ENCODE measurements at regions of chr14 and their contacts with region 1.

Region 1: DNA sequence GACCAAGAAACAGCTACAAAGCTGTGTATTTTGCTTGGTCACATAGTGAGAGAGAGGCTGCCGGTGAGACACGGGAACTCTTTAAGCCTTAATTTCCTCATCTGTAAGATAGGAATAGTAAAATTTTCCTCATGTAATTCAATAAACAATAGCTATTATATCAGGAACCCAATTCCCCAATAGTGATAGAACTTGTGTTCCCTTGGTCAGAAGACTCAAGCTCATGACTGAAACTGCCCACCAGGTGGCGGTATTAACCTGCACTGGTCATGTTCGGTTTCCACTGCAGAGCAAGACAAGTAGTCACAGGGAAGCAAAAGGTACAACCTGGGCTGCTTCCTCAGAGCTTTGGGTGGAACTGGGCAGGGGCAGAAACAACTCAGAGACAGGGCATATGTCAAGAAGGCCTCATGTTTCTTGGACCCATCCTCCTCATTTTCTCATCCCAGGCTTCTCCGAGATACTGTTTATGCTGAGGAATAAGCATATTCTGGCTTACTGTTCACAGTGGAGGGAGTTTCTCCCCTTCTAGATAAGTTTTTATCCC is 4.2 kb upstream of the AJUBA start:
- DNase-seq: peak; percentile 81 to 96 (median 88)
- ATAC-seq: peak; percentile 67
- H3K4me3 ChIP-seq: no peak overlapping the region
- H3K4me3 Mint-ChIP-seq: peak overlapping the region; percentile 3
- H3K27ac ChIP-seq: no peak overlapping the region
- H3K27ac Mint-ChIP-seq: no peak overlapping the region
- H3K4me1 ChIP-seq: peaks cover 17% of the 10 kb centered on the region
- H3K4me1 Mint-ChIP-seq: peaks cover 3% of the 10 kb centered on the region
- H3K27me3 ChIP-seq: peaks cover 0 to 5% of the 10 kb centered on the region in 2 experiments
- H3K27me3 Mint-ChIP-seq: no peaks in the 10 kb centered on the region
- CTCF ChIP-seq: peak; percentile 95

Region 2: GRCh38 chr14:22614224-22614799 is 372.3 kb before region 1 on chr14:
- CTCF ChIA-PET with region 1: no interaction called
- POLR2A ChIA-PET with region 1: no interaction called
- intact Hi-C with region 1: no loop called
- DNase-seq: no peak
- ATAC-seq: no peak
- H3K4me3 ChIP-seq: no peak overlapping the region
- H3K4me3 Mint-ChIP-seq: no peak overlapping the region
- H3K27ac ChIP-seq: no peak overlapping the region
- H3K27ac Mint-ChIP-seq: no peak overlapping the region
- H3K4me1 ChIP-seq: no peaks in the 10 kb centered on the region
- H3K4me1 Mint-ChIP-seq: no peaks in the 10 kb centered on the region
- H3K27me3 ChIP-seq: no peaks in the 10 kb centered on the region
- H3K27me3 Mint-ChIP-seq: no peaks in the 10 kb centered on the region
- CTCF ChIP-seq: no peak

Region 3: DNA sequence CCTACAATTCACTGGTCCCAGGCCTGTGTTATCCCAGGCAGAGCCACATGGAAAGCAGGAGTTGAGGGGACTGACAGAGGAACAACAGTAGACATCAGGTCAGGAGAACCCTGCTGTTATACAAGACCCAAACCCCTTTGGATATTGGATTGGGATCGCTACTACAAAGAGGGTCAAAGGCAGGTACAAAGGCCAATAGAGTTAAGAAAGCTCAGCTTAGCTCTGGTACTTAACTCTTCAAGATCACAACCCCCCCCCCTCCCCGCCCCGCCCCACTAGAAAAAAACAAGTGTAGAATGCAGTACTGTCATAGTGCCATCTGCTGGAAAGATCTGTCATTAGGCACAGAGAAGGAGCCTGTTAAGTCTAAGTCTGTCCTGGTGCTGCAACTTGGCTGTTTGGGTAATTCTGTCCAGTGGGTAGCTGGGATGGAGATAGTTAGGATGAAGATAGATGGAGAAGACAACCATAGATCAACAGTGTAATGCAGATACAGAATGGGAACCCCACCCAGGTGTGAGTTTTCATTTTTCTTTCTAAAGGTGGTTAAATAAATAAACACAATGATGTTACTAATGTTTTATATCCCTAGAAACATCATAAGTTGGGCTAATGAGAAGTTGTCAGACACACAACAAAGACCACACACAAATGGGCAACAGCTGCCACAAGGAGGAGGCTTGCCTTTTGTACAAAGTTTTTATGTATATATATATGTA is 86.3 kb before region 1 on chr14:
- CTCF ChIA-PET with region 1: no interaction called
- POLR2A ChIA-PET with region 1: no interaction called
- intact Hi-C with region 1: no loop called
- DNase-seq: peak in 13 of 14 experiments; percentile 14 to 87 (median 36)
- ATAC-seq: peak; percentile 92
- H3K4me3 ChIP-seq: no peak overlapping the region
- H3K4me3 Mint-ChIP-seq: no peak overlapping the region
- H3K27ac ChIP-seq: no peak overlapping the region
- H3K27ac Mint-ChIP-seq: no peak overlapping the region
- H3K4me1 ChIP-seq: peaks cover 13% of the 10 kb centered on the region
- H3K4me1 Mint-ChIP-seq: peaks cover 15% of the 10 kb centered on the region
- H3K27me3 ChIP-seq: no peaks in the 10 kb centered on the region
- H3K27me3 Mint-ChIP-seq: no peaks in the 10 kb centered on the region
- CTCF ChIP-seq: peak; percentile 68

Region 4: GRCh38 chr14:22929104-22929847 is 57.3 kb before region 1 on chr14 and contains the start of gene PRMT5:
- CTCF ChIA-PET with region 1: interaction called, 17 read pairs
- POLR2A ChIA-PET with region 1: interaction called, 11 read pairs
- intact Hi-C with region 1: loop called (anchors 2 kb)
- DNase-seq: peak; percentile 93 to 100 (median 97)
- ATAC-seq: peak; percentile 96
- H3K4me3 ChIP-seq: peak within 1 kb of the TSS; percentile 91
- H3K4me3 Mint-ChIP-seq: no peak within 1 kb of the TSS
- H3K27ac ChIP-seq: peak within 1 kb of the TSS; percentile 79 to 88
- H3K27ac Mint-ChIP-seq: no peak within 1 kb of the TSS
- H3K4me1 ChIP-seq: peaks cover 30% of the 10 kb centered on the region
- H3K4me1 Mint-ChIP-seq: peaks cover 11% of the 10 kb centered on the region
- H3K27me3 ChIP-seq: no peaks in the 10 kb centered on the region
- H3K27me3 Mint-ChIP-seq: no peaks in the 10 kb centered on the region
- CTCF ChIP-seq: no peak
- total RNA-seq, gene PRMT5: 15.6 to 19.3 TPM

Region 5: GRCh38 chr14:22973217-22974032 is 13.2 kb before region 1 on chr14:
- CTCF ChIA-PET with region 1: interaction called, 42 read pairs
- POLR2A ChIA-PET with region 1: interaction called, 16 read pairs
- intact Hi-C with region 1: loop called (anchors 1 kb)
- DNase-seq: peak in 9 of 14 experiments; percentile 14 to 73 (median 43)
- ATAC-seq: peak; percentile 69
- H3K4me3 ChIP-seq: no peak overlapping the region
- H3K4me3 Mint-ChIP-seq: no peak overlapping the region
- H3K27ac ChIP-seq: no peak overlapping the region
- H3K27ac Mint-ChIP-seq: no peak overlapping the region
- H3K4me1 ChIP-seq: no peaks in the 10 kb centered on the region
- H3K4me1 Mint-ChIP-seq: no peaks in the 10 kb centered on the region
- H3K27me3 ChIP-seq: no peaks in the 10 kb centered on the region
- H3K27me3 Mint-ChIP-seq: no peaks in the 10 kb centered on the region
- CTCF ChIP-seq: peak; percentile 75

Region 6: GRCh38 chr14:23068476-23069412 is 82.2 kb after region 1 on chr14:
- CTCF ChIA-PET with region 1: interaction called, 26 read pairs
- POLR2A ChIA-PET with region 1: interaction called, 3 read pairs
- intact Hi-C with region 1: no loop called
- DNase-seq: peak; percentile 54 to 90 (median 65)
- ATAC-seq: peak; percentile 73
- H3K4me3 ChIP-seq: no peak overlapping the region
- H3K4me3 Mint-ChIP-seq: peak overlapping the region; percentile 78
- H3K27ac ChIP-seq: no peak overlapping the region
- H3K27ac Mint-ChIP-seq: peak overlapping the region; percentile 63
- H3K4me1 ChIP-seq: peaks cover 36% of the 10 kb centered on the region
- H3K4me1 Mint-ChIP-seq: peaks cover 49% of the 10 kb centered on the region
- H3K27me3 ChIP-seq: no peaks in the 10 kb centered on the region
- H3K27me3 Mint-ChIP-seq: no peaks in the 10 kb centered on the region
- CTCF ChIP-seq: peak; percentile 97

Region 7: DNA sequence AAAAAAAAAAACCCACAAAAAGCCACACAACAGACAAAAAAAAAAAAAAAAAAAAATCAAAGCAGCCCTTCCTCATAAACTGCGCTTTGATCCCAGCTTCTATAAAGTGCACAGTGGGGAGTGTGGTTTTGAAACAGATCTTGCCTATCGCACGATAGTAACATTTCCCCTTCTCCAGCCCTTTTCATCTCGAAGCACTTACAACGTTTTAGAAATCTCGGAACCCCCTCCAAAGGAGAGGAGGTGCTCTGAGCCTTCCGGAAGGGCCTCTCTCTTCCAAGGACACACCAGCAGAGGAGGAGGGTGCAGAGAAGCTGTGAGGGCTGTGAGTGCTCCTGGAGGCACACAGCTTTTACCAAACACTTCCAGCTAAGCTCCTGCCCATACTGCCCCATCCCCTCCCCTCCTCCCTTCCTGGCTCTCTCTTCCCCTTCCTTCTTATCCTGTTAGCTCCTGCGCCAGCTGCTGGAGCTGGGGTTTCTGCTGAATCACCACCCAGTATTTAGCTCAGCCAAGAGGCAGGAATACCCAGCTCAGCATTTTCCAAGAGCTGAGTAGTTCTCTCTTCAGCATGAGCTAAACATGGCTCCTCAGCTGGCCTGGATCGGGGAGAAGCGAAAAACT is 168.5 kb after region 1 on chr14:
- CTCF ChIA-PET with region 1: no interaction called
- POLR2A ChIA-PET with region 1: no interaction called
- intact Hi-C with region 1: no loop called
- DNase-seq: peak in 1 of 14 experiments; percentile 16
- ATAC-seq: peak; percentile 41
- H3K4me3 ChIP-seq: no peak overlapping the region
- H3K4me3 Mint-ChIP-seq: peak overlapping the region; percentile 70
- H3K27ac ChIP-seq: no peak overlapping the region
- H3K27ac Mint-ChIP-seq: no peak overlapping the region
- H3K4me1 ChIP-seq: peaks cover 24% of the 10 kb centered on the region
- H3K4me1 Mint-ChIP-seq: peaks cover 28% of the 10 kb centered on the region
- H3K27me3 ChIP-seq: peaks cover 0 to 3% of the 10 kb centered on the region in 2 experiments
- H3K27me3 Mint-ChIP-seq: peaks cover 14% of the 10 kb centered on the region
- CTCF ChIP-seq: no peak